Activated CD4-positive, alpha-beta T cell treated with anti-CD3 and anti-CD28 coated beads for 36 hours (primary cell): ENCODE measurements at regions of chr14 and their contacts with region 1.

Region 1: DNA sequence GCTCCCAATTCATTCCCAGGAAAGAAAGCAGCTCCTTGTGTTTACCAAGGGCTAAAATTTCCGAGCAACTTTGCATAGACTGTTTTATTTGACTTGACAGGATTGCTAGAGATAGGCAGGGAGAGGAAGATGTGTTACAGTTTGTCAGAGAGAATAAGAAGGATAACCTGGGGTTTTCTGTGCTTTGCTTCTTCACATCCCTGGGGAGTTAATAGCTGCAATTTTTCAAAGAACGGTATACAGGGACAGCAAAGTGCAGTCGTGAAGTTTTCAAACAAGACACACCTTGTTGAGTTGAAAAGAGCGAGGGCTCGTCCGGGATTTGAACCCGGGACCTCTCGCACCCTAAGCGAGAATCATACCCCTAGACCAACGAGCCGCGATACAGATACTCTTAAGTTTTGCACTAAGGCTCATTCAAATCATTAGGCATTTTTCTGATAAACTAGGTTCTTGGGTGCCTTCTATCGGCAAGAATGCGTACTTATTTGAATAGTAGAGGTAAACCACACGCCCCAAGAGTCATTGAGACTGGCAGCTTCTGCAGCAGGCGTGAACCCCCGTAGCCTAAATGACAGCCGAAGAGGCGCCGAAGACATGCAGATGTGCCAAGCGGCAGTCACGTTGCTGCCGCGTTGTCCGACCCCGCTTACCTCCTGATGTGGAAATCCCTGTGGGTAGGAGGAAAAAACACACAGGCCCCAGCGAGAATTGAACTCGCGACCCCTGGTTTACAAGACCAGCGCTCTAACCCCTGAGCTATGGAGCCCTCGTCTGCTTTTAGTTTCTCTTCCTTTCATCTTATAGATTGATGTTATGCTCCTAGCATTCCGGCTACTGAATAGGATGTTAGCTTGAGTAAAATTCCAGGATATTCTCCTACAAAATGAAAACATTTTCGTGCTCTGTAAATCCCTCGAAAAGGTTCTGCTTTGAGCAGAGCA is 22.2 kb upstream of the RNASE12 start:
- DNase-seq: peak; percentile 91
- ATAC-seq: peak; percentile 87
- H3K4me3 Mint-ChIP-seq: no peak overlapping the region
- H3K27ac Mint-ChIP-seq: no peak overlapping the region
- H3K4me1 Mint-ChIP-seq: peaks cover 8% of the 10 kb centered on the region
- H3K27me3 Mint-ChIP-seq: no peaks in the 10 kb centered on the region

Region 2: DNA sequence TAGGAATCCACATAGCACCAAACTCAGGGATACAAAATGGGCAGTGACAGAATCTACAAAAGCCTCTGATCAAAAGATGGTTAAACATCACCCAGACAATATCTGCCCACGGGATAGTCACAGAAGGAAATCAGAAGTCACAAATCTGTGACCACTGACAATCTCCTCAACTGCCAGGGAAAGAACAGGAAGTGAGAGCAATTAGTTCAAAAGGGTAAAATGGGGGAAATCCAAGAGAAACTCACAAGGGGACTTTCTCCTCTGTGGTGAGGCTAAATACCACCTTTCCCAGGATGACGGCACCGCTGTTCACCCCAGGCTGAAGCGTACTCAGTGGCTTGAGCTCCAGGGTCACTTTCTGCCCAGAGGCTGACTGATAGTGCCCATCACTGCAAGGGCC is 318.3 kb before region 1 on chr14:
- CTCF ChIA-PET with region 1: no interaction called
- POLR2A ChIA-PET with region 1: no interaction called
- intact Hi-C with region 1: no loop called
- DNase-seq: peak; percentile 8
- ATAC-seq: peak; percentile 19
- H3K4me3 Mint-ChIP-seq: no peak overlapping the region
- H3K27ac Mint-ChIP-seq: no peak overlapping the region
- H3K4me1 Mint-ChIP-seq: peaks cover 2% of the 10 kb centered on the region
- H3K27me3 Mint-ChIP-seq: no peaks in the 10 kb centered on the region

Region 3: DNA sequence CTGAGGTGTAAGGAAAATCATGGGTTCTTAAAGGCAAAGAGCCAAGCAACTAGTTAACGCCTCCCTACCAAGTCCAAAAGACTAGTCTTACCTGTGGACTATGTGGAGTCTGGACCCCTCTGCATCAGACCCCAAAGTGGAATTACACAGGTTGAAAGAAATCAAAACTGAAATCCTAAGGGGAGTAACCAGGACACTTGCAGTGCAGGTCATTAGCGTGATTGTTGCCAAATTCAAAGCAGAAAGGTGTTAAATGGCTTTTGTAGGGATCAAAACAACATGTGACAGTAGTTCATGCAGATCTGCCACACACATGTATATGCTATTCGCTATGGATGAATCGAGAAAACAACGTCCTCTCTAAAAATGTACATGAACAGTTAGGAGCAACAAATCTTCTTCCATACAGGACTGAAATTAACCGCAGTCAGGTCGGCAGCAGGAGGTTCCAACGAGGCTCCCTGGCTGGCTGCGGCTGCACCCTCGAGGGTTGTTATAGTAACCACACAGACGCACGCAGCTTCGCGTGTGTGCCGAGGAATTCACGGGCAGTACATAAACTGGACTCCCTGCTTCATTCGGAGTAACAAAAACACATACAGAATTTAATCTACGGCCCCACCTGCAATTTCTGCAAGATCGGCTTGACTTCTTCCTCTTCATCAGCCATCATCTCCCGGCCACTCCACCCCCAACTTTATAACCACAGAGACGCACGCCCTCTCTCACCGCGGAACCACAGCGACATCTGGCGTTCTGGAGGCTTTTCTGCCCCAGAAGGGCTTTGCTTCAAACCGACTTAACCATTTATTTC is 307.9 kb before region 1 on chr14 and contains the start of gene TTC5:
- CTCF ChIA-PET with region 1: interaction called, 5 read pairs
- POLR2A ChIA-PET with region 1: no interaction called
- intact Hi-C with region 1: loop called in 1 of 2 experiments (anchors 1 kb)
- DNase-seq: peak; percentile 92
- ATAC-seq: peak; percentile 98
- H3K4me3 Mint-ChIP-seq: peak within 1 kb of the TSS; percentile 82
- H3K27ac Mint-ChIP-seq: peak within 1 kb of the TSS; percentile 82
- H3K4me1 Mint-ChIP-seq: peaks cover 23% of the 10 kb centered on the region
- H3K27me3 Mint-ChIP-seq: no peaks in the 10 kb centered on the region
- total RNA-seq, gene TTC5: 21.6 to 23.5 TPM

Region 4: DNA sequence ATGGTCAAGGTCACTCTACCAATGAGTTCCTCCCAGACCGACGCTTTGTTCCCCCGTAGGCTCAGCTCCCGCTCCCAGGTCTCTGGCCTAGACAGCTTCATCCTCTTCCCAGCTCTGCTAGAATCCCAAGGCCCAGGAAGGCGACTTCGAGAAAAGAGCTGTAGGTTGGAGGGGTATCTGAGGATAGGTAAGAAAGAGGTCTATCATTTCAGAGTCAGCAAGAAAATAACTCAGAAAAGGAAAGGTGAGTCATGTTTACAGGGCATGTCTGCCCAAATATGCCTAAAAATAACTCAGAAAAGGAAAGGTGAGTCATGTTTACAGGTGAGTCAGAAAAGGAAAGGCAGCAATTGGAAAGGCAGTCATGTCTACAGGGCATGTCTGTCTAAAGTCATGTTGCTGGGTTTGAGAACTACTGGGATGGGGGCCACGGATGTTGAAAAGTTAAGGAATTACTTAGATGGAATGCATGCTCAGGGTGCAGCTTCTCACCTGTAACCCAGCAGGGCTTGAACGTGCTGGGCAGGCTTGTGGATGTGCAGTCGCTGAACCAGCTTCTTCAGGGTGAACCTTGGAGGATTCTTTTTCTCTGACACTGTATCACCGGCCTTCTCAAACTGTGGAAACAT is 212.3 kb before region 1 on chr14:
- CTCF ChIA-PET with region 1: interaction called, 3 read pairs
- POLR2A ChIA-PET with region 1: interaction called, 3 read pairs
- intact Hi-C with region 1: loop called in 1 of 2 experiments (anchors 2 kb)
- DNase-seq: peak; percentile 37
- ATAC-seq: peak; percentile 95
- H3K4me3 Mint-ChIP-seq: peak overlapping the region; percentile 29
- H3K27ac Mint-ChIP-seq: peak overlapping the region; percentile 88
- H3K4me1 Mint-ChIP-seq: peaks cover 34% of the 10 kb centered on the region
- H3K27me3 Mint-ChIP-seq: no peaks in the 10 kb centered on the region

Region 5: DNA sequence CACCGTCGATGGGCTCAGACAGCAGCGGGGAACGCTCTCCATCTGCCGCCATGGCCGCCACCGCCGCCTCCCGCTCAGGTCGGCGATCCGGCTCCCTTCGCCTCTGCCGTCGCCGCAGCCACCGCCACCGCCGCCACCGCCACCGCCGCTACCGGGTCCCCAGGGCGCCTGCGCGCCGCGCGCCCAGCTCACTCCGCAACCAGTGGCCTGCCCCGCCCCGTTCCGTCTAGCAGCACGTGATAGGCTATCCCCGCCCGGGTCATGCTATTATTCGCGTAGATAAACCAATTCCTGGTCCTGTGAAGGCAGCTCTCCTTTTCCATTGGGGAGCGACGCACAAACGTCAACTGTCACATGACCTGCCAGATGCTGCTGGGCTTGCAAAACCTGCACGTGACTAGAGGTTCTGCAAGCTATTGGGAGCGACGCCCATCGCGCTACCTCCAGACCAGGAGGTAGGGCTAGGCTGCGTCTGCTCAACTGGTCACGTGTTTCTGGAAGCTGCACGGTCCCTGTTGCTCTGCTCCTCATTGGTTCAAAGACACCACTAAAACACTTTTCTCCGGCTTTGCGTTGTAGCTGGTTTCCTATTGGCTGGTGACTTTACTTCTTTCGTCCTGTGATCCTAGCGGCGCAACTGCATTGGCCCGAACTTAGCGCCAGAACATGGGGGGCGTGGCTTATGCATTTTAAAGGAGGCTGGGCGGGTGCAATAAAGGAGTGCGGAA is 151.9 kb before region 1 on chr14 and contains the start of gene PIP4P1:
- CTCF ChIA-PET with region 1: interaction called, 4 read pairs
- POLR2A ChIA-PET with region 1: no interaction called
- intact Hi-C with region 1: loop called (anchors 1 to 5 kb)
- DNase-seq: peak; percentile 99
- ATAC-seq: peak; percentile 95
- H3K4me3 Mint-ChIP-seq: peak within 1 kb of the TSS; percentile 84
- H3K27ac Mint-ChIP-seq: peak within 1 kb of the TSS; percentile 96
- H3K4me1 Mint-ChIP-seq: peaks cover 26% of the 10 kb centered on the region
- H3K27me3 Mint-ChIP-seq: no peaks in the 10 kb centered on the region
- total RNA-seq, gene PIP4P1: 24.2 to 24.7 TPM

Region 6: DNA sequence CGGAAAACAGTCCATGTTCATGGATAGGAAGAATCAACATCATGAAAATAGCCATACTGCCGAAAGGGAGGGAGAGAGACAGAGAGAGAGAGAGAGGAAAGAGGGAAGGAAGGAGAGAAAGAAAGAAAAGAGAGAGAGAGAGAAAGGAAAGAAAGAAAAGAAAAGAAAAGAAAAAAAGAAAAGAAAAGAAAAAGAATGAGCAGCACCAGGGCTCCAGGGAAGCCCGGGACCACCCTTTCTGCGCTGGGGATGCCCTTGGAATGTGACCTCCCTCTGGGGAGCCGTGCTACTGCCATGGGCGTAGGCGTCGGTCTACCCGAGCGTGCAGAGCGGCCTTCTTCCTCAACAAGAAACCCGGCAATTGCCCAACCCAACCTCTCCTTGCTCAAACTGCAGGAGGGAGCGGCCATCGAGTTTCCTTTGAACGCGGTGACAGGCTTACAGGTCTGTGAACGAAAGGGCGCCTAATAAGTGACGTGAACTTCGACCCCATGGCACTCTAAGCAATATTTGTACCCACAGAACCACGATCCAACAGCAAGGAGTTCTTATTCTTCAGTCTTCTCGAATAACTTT is 11.2 kb after region 1 on chr14:
- CTCF ChIA-PET with region 1: interaction called, 33 read pairs
- POLR2A ChIA-PET with region 1: interaction called, 8 read pairs
- intact Hi-C with region 1: loop called (anchors 1 kb)
- DNase-seq: peak; percentile 67
- ATAC-seq: peak; percentile 34
- H3K4me3 Mint-ChIP-seq: peak overlapping the region; percentile 71
- H3K27ac Mint-ChIP-seq: peak overlapping the region; percentile 84
- H3K4me1 Mint-ChIP-seq: peaks cover 68% of the 10 kb centered on the region
- H3K27me3 Mint-ChIP-seq: peaks cover 31% of the 10 kb centered on the region

Region 7: GRCh38 chr14:20662968-20663732 is 49.8 kb after region 1 on chr14:
- CTCF ChIA-PET with region 1: interaction called, 5 read pairs
- POLR2A ChIA-PET with region 1: no interaction called
- intact Hi-C with region 1: loop called in 1 of 2 experiments (anchors 1 kb)
- DNase-seq: peak; percentile 93
- ATAC-seq: peak; percentile 88
- H3K4me3 Mint-ChIP-seq: peak overlapping the region; percentile 72
- H3K27ac Mint-ChIP-seq: peak overlapping the region; percentile 40
- H3K4me1 Mint-ChIP-seq: peaks cover 22% of the 10 kb centered on the region
- H3K27me3 Mint-ChIP-seq: peaks cover 2% of the 10 kb centered on the region